CD4-positive, alpha-beta memory T cell (primary cell): ENCODE measurements at regions of chrX and their contacts with region 1.

Region 1: DNA sequence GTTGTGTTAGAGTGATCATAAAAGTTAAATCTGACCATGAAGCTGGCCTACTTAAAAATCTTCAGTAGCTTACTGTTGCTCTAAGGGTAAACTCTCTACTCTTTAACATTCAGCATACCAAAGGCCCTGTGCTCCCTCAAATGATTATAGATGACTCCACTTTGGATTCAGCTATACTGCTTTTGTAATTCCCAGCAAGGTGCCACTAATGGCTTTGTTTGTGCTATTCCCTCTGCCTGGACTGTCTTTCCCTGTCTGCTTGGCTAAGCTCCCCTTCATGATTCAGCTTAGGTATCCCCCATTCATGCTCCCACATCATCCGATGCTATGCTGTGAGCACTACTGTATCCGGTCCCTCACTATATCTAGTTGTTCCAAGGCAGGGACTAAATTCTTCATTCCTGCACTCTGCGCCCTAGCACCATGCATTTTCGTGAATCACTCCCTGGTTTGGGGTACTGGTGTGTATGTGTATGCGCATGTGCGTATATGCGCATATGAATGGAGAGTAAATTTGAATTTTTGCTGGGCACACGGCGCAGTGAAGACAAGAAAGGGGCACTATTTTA is 453 bp upstream of the PBDC1 start:
- DNase-seq: no peak
- H3K4me3 ChIP-seq: peak overlapping the region; percentile 38 to 61
- H3K4me3 Mint-ChIP-seq: peak overlapping the region; percentile 92 to 96 (median 96)
- H3K27ac ChIP-seq: peak overlapping the region; percentile 69
- H3K27ac Mint-ChIP-seq: peak overlapping the region; percentile 94 to 98 (median 96)
- H3K4me1 ChIP-seq: peaks cover 50% of the 10 kb centered on the region
- H3K4me1 Mint-ChIP-seq: peaks cover 35 to 69% (median 48%) of the 10 kb centered on the region in 4 donors
- H3K27me3 ChIP-seq: no peaks in the 10 kb centered on the region
- H3K27me3 Mint-ChIP-seq: no peaks in the 10 kb centered on the region

Region 2: GRCh38 chrX:75997692-75998091 is 174.7 kb before region 1 on chrX:
- CTCF ChIA-PET with region 1: no interaction called
- POLR2A ChIA-PET with region 1: no interaction called
- intact Hi-C with region 1: no loop called
- DNase-seq: no peak
- H3K4me3 ChIP-seq: no peak overlapping the region
- H3K4me3 Mint-ChIP-seq: no peak overlapping the region
- H3K27ac ChIP-seq: no peak overlapping the region
- H3K27ac Mint-ChIP-seq: no peak overlapping the region
- H3K4me1 ChIP-seq: no peaks in the 10 kb centered on the region
- H3K4me1 Mint-ChIP-seq: no peaks in the 10 kb centered on the region
- H3K27me3 ChIP-seq: no peaks in the 10 kb centered on the region
- H3K27me3 Mint-ChIP-seq: peaks cover 2 to 3% of the 10 kb centered on the region in 2 donors

Region 3: GRCh38 chrX:76148753-76149152 is 23.7 kb before region 1 on chrX:
- CTCF ChIA-PET with region 1: interaction called, 4 read pairs
- POLR2A ChIA-PET with region 1: interaction called, 15 read pairs
- intact Hi-C with region 1: no loop called
- DNase-seq: peak; percentile 60 to 74 (median 69)
- H3K4me3 ChIP-seq: peak overlapping the region; percentile 6 to 32
- H3K4me3 Mint-ChIP-seq: peak overlapping the region; percentile 73 to 92 (median 82)
- H3K27ac ChIP-seq: peak overlapping the region; percentile 67
- H3K27ac Mint-ChIP-seq: peak overlapping the region; percentile 89 to 99 (median 97)
- H3K4me1 ChIP-seq: peaks cover 25% of the 10 kb centered on the region
- H3K4me1 Mint-ChIP-seq: peaks cover 10 to 27% (median 20%) of the 10 kb centered on the region in 4 donors
- H3K27me3 ChIP-seq: no peaks in the 10 kb centered on the region
- H3K27me3 Mint-ChIP-seq: no peaks in the 10 kb centered on the region

Region 4: DNA sequence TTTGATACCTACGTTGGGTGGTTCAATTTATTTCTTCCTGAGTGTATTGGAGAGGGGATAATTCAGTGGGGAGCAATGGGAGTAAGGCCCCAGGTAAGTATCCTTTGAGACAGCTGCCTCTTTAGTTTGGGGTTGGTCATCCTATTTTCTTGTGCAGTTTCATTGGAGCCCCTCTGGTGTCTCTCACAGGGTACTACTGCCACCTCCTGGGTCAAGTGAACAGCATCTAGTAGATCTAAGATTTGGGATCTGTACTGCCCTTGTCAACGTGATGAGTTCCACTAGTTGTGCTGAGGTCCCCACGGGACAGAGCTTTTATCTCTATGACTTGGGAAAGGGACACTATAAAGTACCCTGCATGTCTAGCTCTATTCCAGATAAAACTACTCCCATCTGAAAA is 81.0 kb after region 1 on chrX:
- CTCF ChIA-PET with region 1: interaction called, 4 read pairs
- POLR2A ChIA-PET with region 1: interaction called, 3 read pairs
- intact Hi-C with region 1: loop called (anchors 2 kb)
- DNase-seq: peak; percentile 32 to 45 (median 41)
- H3K4me3 ChIP-seq: no peak overlapping the region
- H3K4me3 Mint-ChIP-seq: no peak overlapping the region
- H3K27ac ChIP-seq: no peak overlapping the region
- H3K27ac Mint-ChIP-seq: peak overlapping the region in 1 of 7 donors; percentile 4
- H3K4me1 ChIP-seq: no peaks in the 10 kb centered on the region
- H3K4me1 Mint-ChIP-seq: peaks cover 0 to 1% (median 0%) of the 10 kb centered on the region in 4 donors
- H3K27me3 ChIP-seq: no peaks in the 10 kb centered on the region
- H3K27me3 Mint-ChIP-seq: no peaks in the 10 kb centered on the region

Region 5: DNA sequence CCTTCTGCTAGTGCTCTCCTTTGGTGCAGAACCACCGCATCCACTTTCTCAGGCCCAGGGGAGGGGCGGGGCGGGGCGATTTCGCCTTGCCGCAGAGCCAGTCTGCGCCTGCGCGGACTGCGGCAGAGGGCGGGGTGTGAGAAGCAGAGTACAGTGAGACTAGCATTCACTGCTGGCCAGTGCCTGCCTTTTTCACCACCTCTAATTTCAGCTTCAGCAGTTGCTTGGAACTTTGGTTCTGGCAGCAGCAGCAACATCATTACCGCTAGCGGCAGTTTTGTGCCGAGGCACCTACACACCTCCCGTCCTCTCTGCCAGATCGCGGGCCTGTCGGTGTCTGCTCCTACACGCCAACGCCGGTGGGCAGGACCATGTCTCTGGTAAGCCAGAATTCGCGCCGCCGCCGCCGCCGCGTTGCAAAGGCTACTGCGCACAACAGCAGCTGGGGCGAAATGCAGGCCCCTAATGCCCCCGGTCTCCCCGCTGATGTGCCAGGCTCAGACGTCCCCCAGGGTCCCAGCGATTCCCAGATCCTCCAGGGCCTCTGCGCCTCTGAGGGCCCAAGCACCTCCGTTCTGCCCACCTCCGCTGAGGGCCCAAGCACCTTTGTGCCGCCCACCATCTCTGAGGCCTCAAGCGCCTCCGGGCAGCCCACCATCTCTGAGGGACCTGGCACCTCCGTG is 255.3 kb after region 1 on chrX and contains the start of gene MAGEE1:
- CTCF ChIA-PET with region 1: no interaction called
- POLR2A ChIA-PET with region 1: no interaction called
- intact Hi-C with region 1: loop called (anchors 10 kb)
- DNase-seq: peak; percentile 78 to 81 (median 80)
- H3K4me3 ChIP-seq: peak within 1 kb of the TSS; percentile 36 to 73
- H3K4me3 Mint-ChIP-seq: peak within 1 kb of the TSS; percentile 87 to 94 (median 94)
- H3K27ac ChIP-seq: peak within 1 kb of the TSS; percentile 67
- H3K27ac Mint-ChIP-seq: peak within 1 kb of the TSS; percentile 87 to 96 (median 94)
- H3K4me1 ChIP-seq: peaks cover 33% of the 10 kb centered on the region
- H3K4me1 Mint-ChIP-seq: peaks cover 17 to 43% (median 28%) of the 10 kb centered on the region in 4 donors
- H3K27me3 ChIP-seq: no peaks in the 10 kb centered on the region
- H3K27me3 Mint-ChIP-seq: no peaks in the 10 kb centered on the region
- total RNA-seq, gene MAGEE1: 10.5 to 11.0 TPM

Region 6: GRCh38 chrX:77899081-77899828 is 1726.8 kb after region 1 on chrX and contains the start of gene COX7B:
- CTCF ChIA-PET with region 1: no interaction called
- POLR2A ChIA-PET with region 1: no interaction called
- intact Hi-C with region 1: loop called (anchors 2 kb)
- DNase-seq: peak; percentile 82 to 91 (median 88)
- H3K4me3 ChIP-seq: peak within 1 kb of the TSS; percentile 42 to 76
- H3K4me3 Mint-ChIP-seq: peak within 1 kb of the TSS; percentile 84 to 96 (median 91)
- H3K27ac ChIP-seq: peak within 1 kb of the TSS; percentile 81
- H3K27ac Mint-ChIP-seq: peak within 1 kb of the TSS; percentile 88 to 99 (median 95)
- H3K4me1 ChIP-seq: peaks cover 25% of the 10 kb centered on the region
- H3K4me1 Mint-ChIP-seq: peaks cover 7 to 49% (median 20%) of the 10 kb centered on the region in 4 donors
- H3K27me3 ChIP-seq: no peaks in the 10 kb centered on the region
- H3K27me3 Mint-ChIP-seq: no peaks in the 10 kb centered on the region
- total RNA-seq, gene COX7B: 115 to 126 TPM